HCT116 (cell line): ENCODE measurements at regions of chr6 and their contacts with region 1.

Region 1: DNA sequence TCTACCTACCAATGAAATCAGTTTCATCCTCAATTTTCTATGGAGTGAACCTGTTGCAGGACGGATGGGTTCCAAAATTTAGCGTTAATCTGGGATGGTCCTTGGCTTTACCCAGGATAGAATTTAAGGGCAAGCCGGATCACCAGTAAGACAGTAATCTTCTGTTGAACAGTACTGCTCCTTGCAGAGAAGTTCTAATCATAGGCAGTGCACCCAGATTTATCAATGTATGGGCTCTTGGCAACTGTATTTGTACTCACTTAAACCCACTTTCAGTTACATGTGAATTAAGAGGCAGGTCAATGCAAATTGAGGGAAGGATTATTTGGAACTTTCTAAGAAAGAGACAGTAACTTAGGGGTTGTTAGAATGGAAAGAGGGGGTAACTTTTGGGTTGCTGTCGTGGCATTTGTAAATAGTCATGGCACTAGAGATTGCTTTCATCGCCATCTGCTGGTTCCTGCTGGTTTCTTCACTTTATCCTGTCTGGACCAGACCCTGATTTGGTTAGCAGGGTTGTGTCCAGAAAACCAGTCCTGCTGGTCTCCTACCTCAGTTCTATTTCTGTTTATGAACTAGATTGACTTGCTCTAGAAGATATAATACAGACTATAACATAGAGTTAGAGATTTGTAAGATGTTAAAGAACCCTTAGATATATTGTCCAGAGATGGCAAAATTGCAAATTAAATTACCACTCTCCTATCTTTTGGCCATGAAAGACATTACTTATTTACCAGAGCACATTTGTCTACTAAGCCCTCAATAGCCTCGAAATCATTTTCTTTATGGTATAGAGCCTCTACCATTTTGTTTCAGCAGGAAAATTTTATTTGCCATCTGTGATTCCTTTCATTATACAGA is 646.3 kb downstream of the UTRN start:
- DNase-seq: no peak
- ATAC-seq: peak; percentile 63
- H3K4me3 ChIP-seq: no peak overlapping the region
- H3K27ac ChIP-seq: peak overlapping the region; percentile 76; the same call in 1 of the 2 replicates
- H3K4me1 ChIP-seq: peaks cover 0 to 43% of the 10 kb centered on the region in 2 experiments; a peak in 2 of 4 replicates
- H3K27me3 ChIP-seq: no peaks in the 10 kb centered on the region
- CTCF ChIP-seq: peak; percentile 47 to 78 (median 69); a peak in 5 of 6 replicates
- POLR2A ChIP-seq: no peak
- RAD21 ChIP-seq: peak; percentile 80

Region 2: DNA sequence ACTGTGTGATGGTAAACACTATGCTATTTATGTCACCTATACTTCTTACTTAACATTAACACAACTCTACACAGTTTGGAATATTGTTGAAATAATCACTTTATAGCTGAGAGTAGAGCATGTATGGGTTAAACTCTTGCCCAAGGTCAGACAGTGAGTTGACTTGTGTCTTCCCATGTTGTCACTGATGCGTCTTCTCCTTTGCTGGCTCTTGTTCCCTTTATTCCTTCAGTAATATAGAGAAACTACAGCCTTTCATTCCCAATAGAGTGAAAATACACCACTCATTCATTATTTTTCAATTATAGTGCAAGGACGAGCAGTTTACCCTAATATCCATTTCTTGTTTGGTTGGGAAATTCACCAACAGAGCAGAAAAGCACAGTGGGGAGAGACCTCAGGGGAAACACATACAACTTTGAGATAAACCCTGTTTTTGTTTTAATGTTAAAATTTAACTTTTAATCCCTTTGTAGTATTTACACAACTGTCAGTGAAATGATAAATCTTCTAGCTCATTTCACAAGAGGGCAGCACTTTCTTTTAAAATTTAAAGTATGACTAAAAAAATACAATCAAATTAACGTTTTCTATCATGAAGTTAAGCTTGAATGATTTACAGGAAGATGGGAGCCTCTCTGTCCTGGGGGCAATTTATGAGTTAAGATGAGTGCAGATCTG is 283.3 kb before region 1 on chr6:
- CTCF ChIA-PET with region 1: interaction called, 3 read pairs
- POLR2A ChIA-PET with region 1: no interaction called
- RAD21 ChIA-PET with region 1: no interaction called
- intact Hi-C with region 1: loop called (anchors 1 kb)
- DNase-seq: no peak
- ATAC-seq: no peak
- H3K4me3 ChIP-seq: no peak overlapping the region
- H3K27ac ChIP-seq: no peak overlapping the region
- H3K4me1 ChIP-seq: peaks cover 0 to 8% of the 10 kb centered on the region in 2 experiments; a peak in 2 of 4 replicates
- H3K27me3 ChIP-seq: no peaks in the 10 kb centered on the region
- CTCF ChIP-seq: peak in 2 of 3 experiments; percentile 20 to 51; a peak in 1 of 6 replicates
- POLR2A ChIP-seq: no peak
- RAD21 ChIP-seq: peak; percentile 71

Region 3: GRCh38 chr6:145028144-145028818 is 96.9 kb after region 1 on chr6:
- CTCF ChIA-PET with region 1: interaction called, 3 read pairs
- POLR2A ChIA-PET with region 1: no interaction called
- RAD21 ChIA-PET with region 1: no interaction called
- intact Hi-C with region 1: loop called (anchors 5 kb)
- DNase-seq: peak; percentile 71
- ATAC-seq: peak; percentile 98
- H3K4me3 ChIP-seq: peak overlapping the region in 1 of 2 experiments; percentile 5; a peak in 1 of 4 replicates
- H3K27ac ChIP-seq: no peak overlapping the region
- H3K4me1 ChIP-seq: peaks cover 0 to 25% of the 10 kb centered on the region in 2 experiments; a peak in 2 of 4 replicates
- H3K27me3 ChIP-seq: no peaks in the 10 kb centered on the region
- CTCF ChIP-seq: peak; percentile 52 to 76 (median 69)
- POLR2A ChIP-seq: no peak
- RAD21 ChIP-seq: peak; percentile 91

Region 4: GRCh38 chr6:145137426-145137825 is 206.0 kb after region 1 on chr6:
- CTCF ChIA-PET with region 1: no interaction called
- POLR2A ChIA-PET with region 1: no interaction called
- RAD21 ChIA-PET with region 1: no interaction called
- intact Hi-C with region 1: loop called (anchors 2 kb)
- DNase-seq: no peak
- ATAC-seq: peak; percentile 60
- H3K4me3 ChIP-seq: no peak overlapping the region
- H3K27ac ChIP-seq: no peak overlapping the region
- H3K4me1 ChIP-seq: no peaks in the 10 kb centered on the region
- H3K27me3 ChIP-seq: no peaks in the 10 kb centered on the region
- CTCF ChIP-seq: peak; percentile 16 to 40 (median 34); a peak in 2 of 6 replicates
- POLR2A ChIP-seq: no peak
- RAD21 ChIP-seq: peak; percentile 75

Region 5: GRCh38 chr6:145214570-145214969 is 283.2 kb after region 1 on chr6:
- CTCF ChIA-PET with region 1: no interaction called
- POLR2A ChIA-PET with region 1: no interaction called
- RAD21 ChIA-PET with region 1: interaction called in 1 of 2 experiments, 3 read pairs
- intact Hi-C with region 1: loop called (anchors 2 kb)
- DNase-seq: peak; percentile 36
- ATAC-seq: no peak
- H3K4me3 ChIP-seq: no peak overlapping the region
- H3K27ac ChIP-seq: no peak overlapping the region
- H3K4me1 ChIP-seq: peaks cover 0 to 5% of the 10 kb centered on the region in 2 experiments; a peak in 2 of 4 replicates
- H3K27me3 ChIP-seq: no peaks in the 10 kb centered on the region
- CTCF ChIP-seq: peak; percentile 33 to 68 (median 63); a peak in 5 of 6 replicates
- POLR2A ChIP-seq: no peak
- RAD21 ChIP-seq: peak; percentile 77

Region 6: DNA sequence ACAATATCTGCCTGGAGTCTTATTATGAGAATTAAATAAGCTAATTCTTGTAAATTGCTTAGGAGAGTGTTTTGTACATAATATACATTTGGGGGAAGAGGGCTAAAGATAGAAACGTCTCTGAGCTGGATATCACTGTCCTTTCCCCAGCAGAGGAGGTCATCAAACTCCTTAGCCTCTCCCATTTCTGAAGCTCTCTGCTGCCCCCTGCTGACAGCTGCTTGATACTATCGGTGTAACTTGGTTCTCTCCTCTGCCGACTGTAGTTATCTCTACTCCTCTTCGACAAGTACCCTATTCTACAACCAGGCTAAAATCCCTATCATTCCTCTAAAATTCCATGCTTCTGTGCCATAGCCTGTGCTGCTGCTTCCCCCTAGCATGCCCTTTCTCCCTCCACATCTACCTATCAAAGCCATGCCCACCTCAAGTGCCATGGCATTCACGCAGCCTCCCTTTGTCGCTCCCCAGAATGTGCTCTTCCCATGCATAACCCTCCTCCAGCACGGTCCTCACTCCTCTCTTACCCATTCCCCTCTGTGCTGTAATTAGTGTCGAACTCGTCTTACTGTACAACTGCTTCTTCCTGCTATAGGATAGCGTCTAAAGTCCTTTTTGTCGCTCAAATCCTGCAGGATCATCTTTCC is 702.7 kb after region 1 on chr6:
- CTCF ChIA-PET with region 1: no interaction called
- POLR2A ChIA-PET with region 1: no interaction called
- RAD21 ChIA-PET with region 1: no interaction called
- intact Hi-C with region 1: loop called (anchors 1 kb)
- DNase-seq: peak; percentile 75
- ATAC-seq: peak; percentile 98
- H3K4me3 ChIP-seq: no peak overlapping the region
- H3K27ac ChIP-seq: no peak overlapping the region
- H3K4me1 ChIP-seq: no peaks in the 10 kb centered on the region
- H3K27me3 ChIP-seq: no peaks in the 10 kb centered on the region
- CTCF ChIP-seq: peak; percentile 46 to 80 (median 78); a peak in 5 of 6 replicates
- POLR2A ChIP-seq: no peak
- RAD21 ChIP-seq: peak; percentile 90